ENCODE measurements at regions of chr7 and their contacts with region 1.

Region 1: DNA sequence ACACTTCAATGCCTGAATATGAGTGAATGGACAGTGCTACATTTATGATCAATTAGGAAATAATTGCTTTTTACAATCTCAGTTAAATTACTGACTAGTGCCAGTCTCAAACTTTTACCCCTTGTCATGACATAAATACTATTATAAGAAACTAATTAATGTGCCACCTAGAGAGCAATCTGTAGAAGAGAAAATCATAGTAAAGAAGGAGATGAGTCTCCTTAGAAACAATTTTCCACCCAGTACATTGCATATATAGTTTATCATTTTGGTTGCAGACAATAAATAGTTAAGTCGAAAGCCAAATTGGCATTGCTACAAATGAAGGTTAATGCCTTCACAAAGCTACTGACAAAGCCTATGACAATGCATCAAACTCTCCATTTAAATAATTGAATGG is 68.6 kb downstream of the SLC13A1 start:
- DNase-seq: no peak
- H3K4me3 Mint-ChIP-seq: no peak overlapping the region
- H3K27ac Mint-ChIP-seq: no peak overlapping the region
- H3K4me1 Mint-ChIP-seq: no peaks in the 10 kb centered on the region
- H3K27me3 Mint-ChIP-seq: no peaks in the 10 kb centered on the region
- CTCF ChIP-seq: no peak

Region 2: DNA sequence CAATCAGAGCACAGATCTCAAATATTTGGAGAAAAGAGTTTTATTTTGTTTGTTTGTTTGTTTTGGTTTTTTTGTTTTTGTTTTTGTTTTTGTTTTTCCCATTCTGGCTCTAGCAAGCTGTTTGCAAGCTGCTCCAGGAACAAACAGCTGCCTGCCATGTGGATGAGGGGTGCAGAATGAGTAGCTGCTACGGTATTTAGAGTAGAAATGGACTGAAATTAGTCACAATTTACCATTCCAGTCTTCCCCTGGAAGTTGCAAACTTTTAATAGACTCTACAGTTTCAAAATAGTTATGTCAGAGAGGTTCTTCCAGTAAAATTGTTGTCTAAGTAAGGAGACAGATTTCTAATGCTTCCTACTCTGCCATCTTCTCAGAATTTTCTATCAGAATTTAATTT is 108.6 kb before region 1 on chr7:
- CTCF ChIA-PET with region 1: no interaction called
- POLR2A ChIA-PET with region 1: no interaction called
- intact Hi-C with region 1: no loop called
- DNase-seq: peak; percentile 5
- H3K4me3 Mint-ChIP-seq: no peak overlapping the region
- H3K27ac Mint-ChIP-seq: no peak overlapping the region
- H3K4me1 Mint-ChIP-seq: no peaks in the 10 kb centered on the region
- H3K27me3 Mint-ChIP-seq: no peaks in the 10 kb centered on the region
- CTCF ChIP-seq: no peak

Region 3: GRCh38 chr7:123143252-123144006 is 12.3 kb after region 1 on chr7:
- CTCF ChIA-PET with region 1: interaction called, 15 read pairs
- POLR2A ChIA-PET with region 1: interaction called, 3 read pairs
- intact Hi-C with region 1: no loop called
- DNase-seq: no peak
- H3K4me3 Mint-ChIP-seq: no peak overlapping the region
- H3K27ac Mint-ChIP-seq: no peak overlapping the region
- H3K4me1 Mint-ChIP-seq: no peaks in the 10 kb centered on the region
- H3K27me3 Mint-ChIP-seq: peaks cover 23% of the 10 kb centered on the region
- CTCF ChIP-seq: no peak

Region 4: DNA sequence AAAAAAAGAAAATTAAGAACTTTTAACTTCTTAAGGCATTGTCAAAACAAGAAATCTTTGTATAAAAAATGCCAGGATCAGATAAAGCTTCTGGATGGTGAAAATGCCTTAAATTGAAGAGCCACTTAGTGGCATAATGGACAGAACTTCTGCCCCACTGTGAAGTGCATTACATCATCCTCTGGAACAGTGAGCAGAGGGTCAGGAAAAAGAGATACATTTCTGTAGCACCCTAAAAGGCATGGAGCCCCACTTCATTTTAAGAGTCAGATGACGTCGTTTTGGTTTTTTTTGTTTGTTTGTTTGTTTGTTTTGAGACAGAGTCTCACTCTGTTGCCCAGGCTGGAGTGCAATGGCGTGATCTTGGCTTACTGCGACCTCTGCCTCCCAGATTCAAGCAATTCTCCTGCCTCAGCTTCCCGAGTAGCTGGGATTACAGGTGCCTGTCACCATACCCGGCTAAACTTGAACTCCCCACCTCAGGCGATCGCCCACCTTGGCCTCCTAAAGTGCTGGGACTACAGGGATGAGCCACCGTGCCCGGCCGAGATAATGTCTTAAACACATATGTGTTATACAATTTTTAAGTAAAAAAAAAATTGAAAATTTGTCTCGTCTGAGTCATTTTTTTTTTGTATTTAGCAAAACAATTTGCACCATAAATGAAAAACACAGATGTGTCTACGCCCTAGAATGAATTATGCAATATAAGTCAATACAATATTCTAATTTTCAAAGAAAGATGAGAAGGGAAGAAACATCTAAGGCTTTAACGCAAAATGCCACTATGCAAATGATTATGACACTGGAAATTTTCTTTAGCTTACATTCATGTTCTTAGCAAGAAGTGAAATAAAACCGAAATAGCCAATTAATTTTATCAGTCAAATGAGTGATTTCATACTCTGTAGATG is 39.5 kb after region 1 on chr7:
- CTCF ChIA-PET with region 1: no interaction called
- POLR2A ChIA-PET with region 1: no interaction called
- intact Hi-C with region 1: no loop called
- DNase-seq: no peak
- H3K4me3 Mint-ChIP-seq: no peak overlapping the region
- H3K27ac Mint-ChIP-seq: no peak overlapping the region
- H3K4me1 Mint-ChIP-seq: no peaks in the 10 kb centered on the region
- H3K27me3 Mint-ChIP-seq: peaks cover 15% of the 10 kb centered on the region
- CTCF ChIP-seq: no peak